B cell (primary cell): ENCODE measurements at regions of chr13 and their contacts with region 1.

Region 1: GRCh38 chr13:31965361-31966066 is 66.1 kb upstream of the FRY start:
- DNase-seq: peak; percentile 88
- ATAC-seq: peak; percentile 87
- H3K4me3 ChIP-seq: peak overlapping the region in 2 of 5 experiments; percentile 5 to 6
- H3K4me3 Mint-ChIP-seq: peak overlapping the region; percentile 52
- H3K27ac ChIP-seq: peak overlapping the region; percentile 86 to 99
- H3K27ac Mint-ChIP-seq: peak overlapping the region; percentile 86
- H3K4me1 ChIP-seq: peaks cover 28 to 30% of the 10 kb centered on the region in 2 donors
- H3K4me1 Mint-ChIP-seq: peaks cover 31% of the 10 kb centered on the region
- H3K27me3 ChIP-seq: no peaks in the 10 kb centered on the region
- H3K27me3 Mint-ChIP-seq: no peaks in the 10 kb centered on the region
- CTCF ChIP-seq: no peak

Region 2: DNA sequence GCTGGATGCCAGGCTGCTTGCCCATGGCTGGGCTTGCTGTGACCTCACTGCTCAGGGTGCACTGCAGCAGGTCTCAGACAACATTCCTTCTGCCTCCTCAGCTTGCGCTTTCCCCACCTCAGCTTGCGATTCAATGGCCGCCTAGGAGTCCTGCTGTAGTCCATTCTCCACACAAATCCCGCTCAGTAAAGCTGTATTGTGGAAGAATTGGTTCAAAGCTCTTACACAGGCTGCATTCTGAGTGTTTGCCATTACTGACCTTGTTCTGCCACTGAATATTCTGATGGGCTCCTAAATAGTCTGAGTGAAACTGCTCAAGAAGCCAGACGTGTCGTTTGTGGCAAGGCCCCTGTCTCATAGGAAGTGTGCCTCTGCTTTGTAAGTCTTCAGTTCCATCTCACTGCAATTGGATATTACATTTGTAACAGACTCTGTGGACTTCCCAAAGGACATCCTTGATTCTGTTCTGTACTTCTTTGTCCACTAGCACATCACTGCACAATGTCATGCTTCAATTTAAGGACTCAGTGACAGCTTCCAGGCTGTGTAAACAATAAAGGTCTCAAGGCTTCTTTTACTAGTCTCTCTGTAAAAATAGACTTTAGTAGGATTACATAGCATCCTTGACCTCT is 1707.9 kb before region 1 on chr13:
- CTCF ChIA-PET with region 1: no interaction called
- POLR2A ChIA-PET with region 1: no interaction called
- intact Hi-C with region 1: no loop called
- DNase-seq: no peak
- ATAC-seq: no peak
- H3K4me3 ChIP-seq: no peak overlapping the region
- H3K4me3 Mint-ChIP-seq: no peak overlapping the region
- H3K27ac ChIP-seq: no peak overlapping the region
- H3K27ac Mint-ChIP-seq: peak overlapping the region; percentile 21
- H3K4me1 ChIP-seq: peaks cover 5 to 6% of the 10 kb centered on the region in 2 donors
- H3K4me1 Mint-ChIP-seq: peaks cover 13% of the 10 kb centered on the region
- H3K27me3 ChIP-seq: no peaks in the 10 kb centered on the region
- H3K27me3 Mint-ChIP-seq: no peaks in the 10 kb centered on the region
- CTCF ChIP-seq: no peak

Region 3: DNA sequence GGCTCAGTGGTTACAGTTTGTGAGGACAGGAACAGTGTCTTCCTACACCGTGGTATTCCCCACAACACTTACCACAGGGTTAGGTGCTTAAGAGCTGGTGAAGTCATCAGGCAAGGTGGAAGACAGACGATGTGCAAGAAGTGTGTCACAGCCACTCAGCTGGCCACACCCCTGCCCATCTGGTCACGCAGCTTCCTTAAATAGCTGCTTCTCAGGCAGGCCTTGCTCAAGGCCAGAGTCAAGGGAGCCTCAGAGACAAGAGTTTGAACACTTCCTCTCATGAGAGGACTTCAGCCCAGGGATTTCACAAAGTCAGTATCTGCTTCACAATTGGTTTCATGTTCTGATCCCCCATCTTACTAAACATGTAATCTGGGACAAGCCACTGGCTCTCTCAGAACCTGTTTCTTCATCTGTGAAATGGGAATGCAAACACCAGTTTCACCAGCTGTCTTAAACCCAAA is 14.3 kb before region 1 on chr13:
- CTCF ChIA-PET with region 1: no interaction called
- POLR2A ChIA-PET with region 1: no interaction called
- intact Hi-C with region 1: loop called (anchors 1 kb)
- DNase-seq: peak; percentile 80
- ATAC-seq: peak; percentile 85
- H3K4me3 ChIP-seq: no peak overlapping the region
- H3K4me3 Mint-ChIP-seq: peak overlapping the region; percentile 64
- H3K27ac ChIP-seq: peak overlapping the region; percentile 44 to 75
- H3K27ac Mint-ChIP-seq: peak overlapping the region; percentile 93
- H3K4me1 ChIP-seq: peaks cover 19 to 22% of the 10 kb centered on the region in 2 donors
- H3K4me1 Mint-ChIP-seq: peaks cover 25% of the 10 kb centered on the region
- H3K27me3 ChIP-seq: no peaks in the 10 kb centered on the region
- H3K27me3 Mint-ChIP-seq: no peaks in the 10 kb centered on the region
- CTCF ChIP-seq: no peak

Region 4: GRCh38 chr13:32031025-32031814 is 65.7 kb after region 1 on chr13 and contains the start of gene FRY:
- CTCF ChIA-PET with region 1: no interaction called
- POLR2A ChIA-PET with region 1: no interaction called
- intact Hi-C with region 1: loop called (anchors 10 kb)
- DNase-seq: peak; percentile 71
- ATAC-seq: peak; percentile 71
- H3K4me3 ChIP-seq: peak within 1 kb of the TSS; percentile 66 to 87 (median 68)
- H3K4me3 Mint-ChIP-seq: peak within 1 kb of the TSS; percentile 76
- H3K27ac ChIP-seq: peak within 1 kb of the TSS in 1 of 2 donors; percentile 58
- H3K27ac Mint-ChIP-seq: peak within 1 kb of the TSS; percentile 79
- H3K4me1 ChIP-seq: peaks cover 8 to 10% of the 10 kb centered on the region in 2 donors
- H3K4me1 Mint-ChIP-seq: peaks cover 23% of the 10 kb centered on the region
- H3K27me3 ChIP-seq: peaks cover 0 to 6% (median 0%) of the 10 kb centered on the region in 4 experiments
- H3K27me3 Mint-ChIP-seq: no peaks in the 10 kb centered on the region
- CTCF ChIP-seq: no peak
- total RNA-seq, gene FRY: 6.3 and 7.8 TPM in 2 replicates

Region 5: GRCh38 chr13:32164622-32165268 is 199.2 kb after region 1 on chr13:
- CTCF ChIA-PET with region 1: no interaction called
- POLR2A ChIA-PET with region 1: no interaction called
- intact Hi-C with region 1: no loop called
- DNase-seq: peak; percentile 39
- ATAC-seq: no peak
- H3K4me3 ChIP-seq: no peak overlapping the region
- H3K4me3 Mint-ChIP-seq: no peak overlapping the region
- H3K27ac ChIP-seq: no peak overlapping the region
- H3K27ac Mint-ChIP-seq: no peak overlapping the region
- H3K4me1 ChIP-seq: peaks cover 0 to 5% of the 10 kb centered on the region in 2 donors
- H3K4me1 Mint-ChIP-seq: peaks cover 9% of the 10 kb centered on the region
- H3K27me3 ChIP-seq: no peaks in the 10 kb centered on the region
- H3K27me3 Mint-ChIP-seq: no peaks in the 10 kb centered on the region
- CTCF ChIP-seq: no peak

Region 6: GRCh38 chr13:32175307-32175706 is 209.8 kb after region 1 on chr13:
- CTCF ChIA-PET with region 1: no interaction called
- POLR2A ChIA-PET with region 1: no interaction called
- intact Hi-C with region 1: no loop called
- DNase-seq: no peak
- ATAC-seq: no peak
- H3K4me3 ChIP-seq: no peak overlapping the region
- H3K4me3 Mint-ChIP-seq: no peak overlapping the region
- H3K27ac ChIP-seq: no peak overlapping the region
- H3K27ac Mint-ChIP-seq: no peak overlapping the region
- H3K4me1 ChIP-seq: no peaks in the 10 kb centered on the region
- H3K4me1 Mint-ChIP-seq: no peaks in the 10 kb centered on the region
- H3K27me3 ChIP-seq: no peaks in the 10 kb centered on the region
- H3K27me3 Mint-ChIP-seq: no peaks in the 10 kb centered on the region
- CTCF ChIP-seq: no peak

Region 7: GRCh38 chr13:32427852-32428580 is 462.5 kb after region 1 on chr13 and contains the start of gene N4BP2L1:
- CTCF ChIA-PET with region 1: no interaction called
- POLR2A ChIA-PET with region 1: no interaction called
- intact Hi-C with region 1: loop called (anchors 1 kb)
- DNase-seq: peak; percentile 93
- ATAC-seq: peak; percentile 74
- H3K4me3 ChIP-seq: peak within 1 kb of the TSS; percentile 73 to 93 (median 80)
- H3K4me3 Mint-ChIP-seq: peak within 1 kb of the TSS; percentile 88
- H3K27ac ChIP-seq: peak within 1 kb of the TSS; percentile 95 to 98
- H3K27ac Mint-ChIP-seq: peak within 1 kb of the TSS; percentile 96
- H3K4me1 ChIP-seq: peaks cover 28 to 47% of the 10 kb centered on the region in 2 donors
- H3K4me1 Mint-ChIP-seq: peaks cover 48% of the 10 kb centered on the region
- H3K27me3 ChIP-seq: no peaks in the 10 kb centered on the region
- H3K27me3 Mint-ChIP-seq: no peaks in the 10 kb centered on the region
- CTCF ChIP-seq: no peak
- total RNA-seq, gene N4BP2L1: 52.8 and 59.0 TPM in 2 replicates